ENCODE measurements at regions of chr3 and their contacts with region 1.

Region 1: DNA sequence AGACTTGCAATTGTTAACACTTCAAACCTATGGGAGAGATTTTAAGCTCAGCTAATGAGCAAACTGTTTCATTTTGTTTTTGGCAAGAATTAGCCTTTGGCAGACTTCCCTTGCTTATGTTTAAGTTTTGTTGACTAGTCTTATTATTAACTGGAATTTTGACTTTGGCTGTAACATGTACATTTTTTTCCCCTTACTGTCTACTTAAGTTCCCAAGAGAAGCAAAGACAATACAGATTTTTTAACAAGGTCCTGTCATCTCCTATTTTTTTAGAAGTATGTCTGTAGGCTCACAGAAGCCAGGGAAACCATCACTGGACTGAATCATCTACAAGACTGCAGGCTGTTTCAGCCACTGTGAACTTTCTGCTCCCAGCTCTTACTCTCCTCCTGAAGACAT is 74.3 kb downstream of the DGKG start:
- DNase-seq: no peak
- ATAC-seq: no peak
- H3K4me3 ChIP-seq: no peak overlapping the region
- H3K27ac ChIP-seq: no peak overlapping the region
- H3K4me1 ChIP-seq: no peaks in the 10 kb centered on the region
- H3K27me3 ChIP-seq: peaks cover 0 to 1% (median 0%) of the 10 kb centered on the region in 3 donors
- CTCF ChIP-seq: no peak

Region 2: GRCh38 chr3:186339180-186339918 is 51.6 kb after region 1 on chr3:
- intact Hi-C with region 1: loop called in 1 of 2 experiments (anchors 2 kb)
- DNase-seq: no peak
- ATAC-seq: no peak
- H3K4me3 ChIP-seq: no peak overlapping the region
- H3K27ac ChIP-seq: no peak overlapping the region
- H3K4me1 ChIP-seq: no peaks in the 10 kb centered on the region
- H3K27me3 ChIP-seq: no peaks in the 10 kb centered on the region
- CTCF ChIP-seq: no peak

Region 3: DNA sequence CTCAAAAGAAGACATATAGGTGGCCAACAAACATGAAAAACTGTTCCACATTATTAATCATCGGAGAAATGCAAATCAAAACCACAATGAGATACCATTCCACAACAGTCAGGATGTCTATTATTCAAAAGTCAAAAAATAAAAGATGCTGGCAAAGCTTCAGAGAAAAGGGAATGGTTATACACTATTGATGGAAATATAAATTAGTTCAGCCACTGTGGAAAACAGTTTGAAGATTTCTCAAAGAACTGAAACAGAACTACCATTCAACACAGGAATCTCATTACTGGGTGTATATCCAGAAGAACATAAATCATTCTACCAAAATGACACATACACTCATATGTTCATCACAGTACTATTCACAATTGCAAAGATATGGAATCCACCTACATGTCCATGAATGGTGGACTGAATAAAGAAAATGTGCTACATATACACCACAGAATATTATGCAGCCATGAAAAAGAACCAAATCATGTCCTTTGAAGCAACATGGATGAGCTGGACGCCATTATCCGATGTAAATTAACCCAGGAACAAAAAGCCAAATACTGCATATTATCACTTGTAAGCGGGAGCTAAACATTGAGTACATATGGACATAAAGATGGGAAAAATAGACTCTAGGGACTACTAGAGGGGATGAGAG is 107.0 kb after region 1 on chr3:
- intact Hi-C with region 1: loop called in 1 of 2 experiments (anchors 5 kb)
- DNase-seq: no peak
- ATAC-seq: no peak
- H3K4me3 ChIP-seq: no peak overlapping the region
- H3K27ac ChIP-seq: no peak overlapping the region
- H3K4me1 ChIP-seq: no peaks in the 10 kb centered on the region
- H3K27me3 ChIP-seq: no peaks in the 10 kb centered on the region
- CTCF ChIP-seq: no peak

Measured in psoas muscle (tissue), 8 donors.